B cell (primary cell): ENCODE measurements at regions of chr13 and their contacts with region 1.

Region 1: DNA sequence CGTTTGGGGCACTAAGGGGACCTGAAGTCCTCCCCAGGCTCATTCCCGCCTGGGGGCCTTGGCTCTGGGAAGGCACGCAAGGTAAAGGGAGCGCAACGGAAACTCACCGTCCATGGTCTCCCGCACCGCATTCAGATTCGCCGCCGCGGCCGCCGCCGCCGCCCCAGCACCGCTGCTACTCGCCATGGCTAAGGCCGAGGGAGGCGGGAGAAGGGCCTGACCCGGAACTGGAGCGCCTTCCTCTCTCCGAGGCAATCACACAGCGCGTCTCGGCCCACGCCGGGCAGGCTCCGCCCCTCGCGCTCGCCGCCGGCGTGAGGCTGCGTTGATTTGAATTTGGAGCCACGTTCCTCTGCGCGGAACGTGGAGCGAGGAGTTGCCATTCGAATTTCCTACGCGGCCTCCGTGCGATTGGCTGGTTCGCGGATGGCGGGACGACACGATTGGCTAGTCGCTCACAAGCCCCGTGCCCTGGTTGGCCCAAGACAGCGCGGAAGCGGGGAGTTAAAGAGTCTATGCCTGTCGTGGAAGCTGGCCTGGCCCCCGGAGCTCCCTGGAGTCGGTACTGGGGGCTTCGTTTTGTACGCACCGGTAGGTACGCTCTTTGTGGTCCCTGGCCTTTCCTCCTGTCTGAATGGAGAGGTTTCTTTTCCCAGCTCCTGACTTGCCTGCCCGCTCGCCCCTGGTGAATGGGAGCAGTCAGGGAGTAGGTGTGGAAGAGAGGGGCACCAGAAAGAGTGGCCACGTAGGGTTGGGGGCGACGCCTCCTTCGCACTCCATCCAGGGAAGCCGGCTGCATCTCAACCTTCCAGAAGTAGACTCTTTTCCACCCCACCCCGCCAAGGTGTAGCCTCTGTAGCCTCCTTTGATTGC is at the starts of genes BORA and MZT1:
- DNase-seq: peak; percentile 98
- ATAC-seq: peak; percentile 93
- H3K4me3 ChIP-seq: peak within 1 kb of the TSS; percentile 71 to 90 (median 85)
- H3K4me3 Mint-ChIP-seq: peak within 1 kb of the TSS; percentile 98
- H3K27ac ChIP-seq: peak within 1 kb of the TSS; percentile 66 to 81
- H3K27ac Mint-ChIP-seq: peak within 1 kb of the TSS; percentile 90
- H3K4me1 ChIP-seq: peaks cover 13 to 20% of the 10 kb centered on the region in 2 donors
- H3K4me1 Mint-ChIP-seq: peaks cover 39% of the 10 kb centered on the region
- H3K27me3 ChIP-seq: no peaks in the 10 kb centered on the region
- H3K27me3 Mint-ChIP-seq: no peaks in the 10 kb centered on the region
- CTCF ChIP-seq: no peak
- total RNA-seq, gene BORA: 7.2 and 8.6 TPM in 2 replicates
- total RNA-seq, gene MZT1: 5.7 TPM in 2 replicates

Region 2: DNA sequence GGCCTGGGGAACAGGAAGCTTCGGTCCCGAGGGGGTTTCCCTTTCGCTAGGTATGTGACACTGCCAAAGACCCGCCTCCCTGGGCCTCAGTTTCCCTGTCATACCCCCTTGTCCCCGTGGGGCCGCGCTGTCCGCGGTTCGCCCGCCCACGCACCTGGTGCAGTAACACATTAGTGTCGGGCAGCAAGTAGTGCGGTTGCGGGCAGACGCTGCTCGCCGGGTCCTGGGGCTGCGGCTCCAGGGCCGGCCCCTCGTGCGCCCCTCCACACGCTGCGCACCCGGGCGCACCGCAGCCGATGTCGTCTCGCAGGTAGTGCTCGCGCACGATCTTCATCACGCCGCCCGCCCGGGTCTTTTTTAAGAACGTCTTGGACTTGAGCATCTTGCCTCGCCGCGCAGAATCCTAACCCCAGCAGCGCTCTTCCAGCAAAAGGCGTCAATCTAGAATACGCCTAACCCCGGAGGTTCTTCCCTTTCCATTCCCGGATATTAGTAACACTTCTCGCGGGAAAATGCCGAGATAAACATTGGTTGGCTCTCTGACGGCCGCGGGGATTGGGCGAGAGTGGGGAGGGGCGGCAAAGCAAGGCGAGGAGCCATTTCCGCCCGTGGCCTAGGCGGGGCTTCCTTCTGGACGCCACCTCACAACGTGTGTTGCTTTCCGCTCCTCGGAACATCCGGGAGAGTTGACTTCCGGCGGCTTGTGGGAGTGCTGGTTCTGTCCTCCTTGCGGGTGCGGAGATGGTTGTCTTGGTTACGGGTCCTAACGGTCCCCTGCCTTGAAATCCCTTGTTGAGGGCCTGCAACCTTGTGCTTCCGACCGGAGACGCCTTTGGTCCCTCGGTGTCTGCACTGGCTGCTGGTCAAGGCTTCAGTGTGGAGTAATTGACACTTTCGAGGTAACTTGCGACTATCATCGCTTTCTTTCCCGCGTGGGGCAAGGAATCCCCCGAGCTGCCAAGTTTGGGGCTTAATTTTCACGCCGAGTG is 54.1 kb after region 1 on chr13 and contains the starts of genes DIS3 and PIBF1:
- CTCF ChIA-PET with region 1: no interaction called
- POLR2A ChIA-PET with region 1: no interaction called
- intact Hi-C with region 1: loop called (anchors 1 kb)
- DNase-seq: peak; percentile 97
- ATAC-seq: peak; percentile 98
- H3K4me3 ChIP-seq: peak within 1 kb of the TSS; percentile 85 to 92 (median 89)
- H3K4me3 Mint-ChIP-seq: peak within 1 kb of the TSS; percentile 98
- H3K27ac ChIP-seq: peak within 1 kb of the TSS; percentile 79 to 89
- H3K27ac Mint-ChIP-seq: peak within 1 kb of the TSS; percentile 95
- H3K4me1 ChIP-seq: peaks cover 21 to 25% of the 10 kb centered on the region in 2 donors
- H3K4me1 Mint-ChIP-seq: peaks cover 51% of the 10 kb centered on the region
- H3K27me3 ChIP-seq: no peaks in the 10 kb centered on the region
- H3K27me3 Mint-ChIP-seq: no peaks in the 10 kb centered on the region
- CTCF ChIP-seq: peak; percentile 13
- total RNA-seq, gene DIS3: 39.8 and 40.6 TPM in 2 replicates
- total RNA-seq, gene PIBF1: 42.2 and 43.1 TPM in 2 replicates

Region 3: GRCh38 chr13:73000027-73000674 is 272.5 kb after region 1 on chr13:
- CTCF ChIA-PET with region 1: no interaction called
- POLR2A ChIA-PET with region 1: no interaction called
- intact Hi-C with region 1: no loop called
- DNase-seq: no peak
- ATAC-seq: no peak
- H3K4me3 ChIP-seq: no peak overlapping the region
- H3K4me3 Mint-ChIP-seq: no peak overlapping the region
- H3K27ac ChIP-seq: no peak overlapping the region
- H3K27ac Mint-ChIP-seq: no peak overlapping the region
- H3K4me1 ChIP-seq: no peaks in the 10 kb centered on the region
- H3K4me1 Mint-ChIP-seq: no peaks in the 10 kb centered on the region
- H3K27me3 ChIP-seq: no peaks in the 10 kb centered on the region
- H3K27me3 Mint-ChIP-seq: no peaks in the 10 kb centered on the region
- CTCF ChIP-seq: no peak

Region 4: GRCh38 chr13:73058736-73059459 is 331.2 kb after region 1 on chr13 and contains the start of gene KLF5:
- CTCF ChIA-PET with region 1: no interaction called
- POLR2A ChIA-PET with region 1: no interaction called
- intact Hi-C with region 1: loop called (anchors 1 kb)
- DNase-seq: peak; percentile 92
- ATAC-seq: peak; percentile 97
- H3K4me3 ChIP-seq: peak within 1 kb of the TSS; percentile 50 to 74 (median 59)
- H3K4me3 Mint-ChIP-seq: peak within 1 kb of the TSS; percentile 96
- H3K27ac ChIP-seq: no peak within 1 kb of the TSS
- H3K27ac Mint-ChIP-seq: peak within 1 kb of the TSS; percentile 87
- H3K4me1 ChIP-seq: peaks cover 15 to 18% of the 10 kb centered on the region in 2 donors
- H3K4me1 Mint-ChIP-seq: peaks cover 24% of the 10 kb centered on the region
- H3K27me3 ChIP-seq: peaks cover 3 to 35% (median 30%) of the 10 kb centered on the region in 4 experiments
- H3K27me3 Mint-ChIP-seq: peaks cover 46% of the 10 kb centered on the region
- CTCF ChIP-seq: no peak
- total RNA-seq, gene KLF5: 0.87 and 0.94 TPM in 2 replicates